GM23248 (cell line): ENCODE measurements at regions of chr20 and their contacts with region 1.

Region 1: DNA sequence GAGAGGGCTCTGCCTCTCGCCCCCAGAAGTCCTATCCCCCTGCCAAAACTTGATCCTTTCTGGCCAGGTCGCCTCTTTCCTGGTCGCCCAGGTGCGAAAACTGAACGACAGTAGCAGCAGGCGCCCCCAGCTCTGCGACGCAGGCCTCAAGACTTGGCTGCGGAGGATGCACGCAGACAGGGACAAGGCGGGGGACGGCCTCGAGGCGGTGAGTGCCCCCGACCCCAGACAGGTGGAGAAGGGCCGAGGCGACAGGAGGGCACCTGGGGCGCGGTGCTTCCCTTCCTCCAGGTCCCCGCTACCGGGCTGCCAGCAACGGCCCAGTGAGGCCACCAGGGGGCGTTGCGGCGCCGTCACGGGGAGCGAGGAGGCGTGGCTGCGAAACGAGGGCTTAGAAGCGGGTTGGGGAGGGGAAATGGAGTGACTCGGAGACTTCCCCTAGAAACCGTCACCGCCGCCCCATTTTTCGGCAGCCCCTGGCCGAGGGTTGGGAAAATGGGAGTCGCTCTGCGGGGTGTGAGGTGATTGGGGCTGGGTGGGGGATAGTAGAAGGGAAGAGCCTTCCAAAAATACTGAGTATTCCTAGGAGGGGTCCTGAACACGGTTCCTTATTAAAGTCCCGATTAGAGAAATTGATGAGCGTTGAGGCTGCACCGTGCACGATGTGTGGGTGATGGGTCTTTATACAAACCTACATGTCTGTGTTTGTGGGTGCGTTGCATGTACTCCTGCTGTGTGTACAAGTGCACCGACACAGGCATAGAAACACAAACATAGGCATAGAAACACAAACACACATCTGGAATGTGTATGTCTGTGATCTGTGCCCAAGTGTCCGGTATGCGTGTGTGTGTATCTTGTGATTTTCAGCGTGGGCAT is 44.6 kb downstream of the ARHGAP40 start:
- DNase-seq: peak; percentile 80
- H3K4me3 ChIP-seq: peak overlapping the region; percentile 54; the same call in 1 of the 2 replicates
- H3K27ac ChIP-seq: no peak overlapping the region
- H3K4me1 ChIP-seq: no peaks in the 10 kb centered on the region
- H3K27me3 ChIP-seq: peaks cover 57% of the 10 kb centered on the region

Region 2: GRCh38 chr20:38907918-38908677 is 261.9 kb after region 1 on chr20:
- in situ Hi-C with region 1: loop called (anchors 10 kb)
- DNase-seq: no peak
- H3K4me3 ChIP-seq: no peak overlapping the region
- H3K27ac ChIP-seq: no peak overlapping the region
- H3K4me1 ChIP-seq: no peaks in the 10 kb centered on the region
- H3K27me3 ChIP-seq: peaks cover 10% of the 10 kb centered on the region